Calu3 (cell line): ENCODE measurements at regions of chrX and their contacts with region 1.

Region 1: DNA sequence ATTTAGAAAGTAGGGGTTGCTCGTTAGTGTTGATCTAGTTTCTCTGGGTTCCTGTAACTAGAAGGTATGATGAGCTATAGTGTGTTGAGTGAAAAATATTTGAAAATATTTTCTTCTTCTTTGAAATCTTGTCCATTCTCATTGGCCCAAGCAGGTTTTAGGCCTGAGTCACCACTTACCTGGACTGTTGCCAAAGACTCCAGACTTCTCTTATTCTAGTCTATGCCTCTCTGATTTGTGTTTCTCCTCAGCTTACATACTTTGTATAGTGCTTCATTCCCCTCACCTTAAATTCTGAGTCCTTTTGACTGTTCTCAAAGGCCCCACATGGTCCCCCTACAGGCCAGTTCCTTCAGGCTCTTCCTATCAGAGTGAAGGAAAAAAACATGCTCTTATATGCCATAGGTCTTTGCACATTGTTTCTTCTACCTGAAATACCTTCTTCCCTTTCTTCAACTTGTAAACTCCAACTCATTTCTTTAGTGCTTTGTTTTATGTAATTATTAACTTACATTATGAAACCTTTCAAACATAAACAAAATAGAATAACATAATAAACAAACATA is 258.2 kb downstream of the PPP1R2C start:
- DNase-seq: peak; percentile 34
- H3K4me3 Mint-ChIP-seq: no peak overlapping the region
- H3K27ac Mint-ChIP-seq: no peak overlapping the region
- H3K4me1 Mint-ChIP-seq: no peaks in the 10 kb centered on the region
- H3K27me3 Mint-ChIP-seq: no peaks in the 10 kb centered on the region
- CTCF ChIP-seq: no peak

Region 2: DNA sequence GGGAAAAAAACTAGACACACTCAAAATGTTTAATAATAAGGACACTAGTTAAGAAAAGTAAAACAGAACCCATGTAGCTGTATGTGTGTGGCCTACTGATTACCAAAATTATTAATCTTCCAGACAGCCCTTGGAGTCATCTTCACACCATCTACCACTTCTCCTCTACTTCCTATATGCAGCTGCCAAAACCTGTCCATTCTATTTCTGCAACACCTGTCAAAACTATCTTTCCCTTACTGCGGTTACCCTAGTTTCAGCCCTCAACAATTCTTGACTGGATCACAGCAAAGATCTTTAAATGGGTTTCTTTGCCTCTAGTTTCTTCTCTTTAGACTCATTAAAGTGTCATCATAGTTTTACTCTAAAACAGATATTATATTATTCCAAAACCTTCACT is 723.2 kb before region 1 on chrX:
- CTCF ChIA-PET with region 1: no interaction called
- intact Hi-C with region 1: loop called (anchors 5 kb)
- DNase-seq: no peak
- H3K4me3 Mint-ChIP-seq: no peak overlapping the region
- H3K27ac Mint-ChIP-seq: no peak overlapping the region
- H3K4me1 Mint-ChIP-seq: peaks cover 13% of the 10 kb centered on the region
- H3K27me3 Mint-ChIP-seq: no peaks in the 10 kb centered on the region
- CTCF ChIP-seq: no peak

Region 3: GRCh38 chrX:42477396-42477795 is 42.4 kb before region 1 on chrX:
- CTCF ChIA-PET with region 1: no interaction called
- intact Hi-C with region 1: no loop called
- DNase-seq: no peak
- H3K4me3 Mint-ChIP-seq: no peak overlapping the region
- H3K27ac Mint-ChIP-seq: no peak overlapping the region
- H3K4me1 Mint-ChIP-seq: no peaks in the 10 kb centered on the region
- H3K27me3 Mint-ChIP-seq: peaks cover 15% of the 10 kb centered on the region
- CTCF ChIP-seq: no peak